ENCODE measurements at regions of chr11 and their contacts with region 1.

Region 1: GRCh38 chr11:34250732-34251639 is 106.8 kb downstream of the ABTB2 start:
- DNase-seq: peak; percentile 67
- ATAC-seq: peak; percentile 90
- H3K4me3 Mint-ChIP-seq: peak overlapping the region; percentile 72
- H3K27ac Mint-ChIP-seq: peak overlapping the region; percentile 58
- H3K4me1 Mint-ChIP-seq: peaks cover 53% of the 10 kb centered on the region
- H3K27me3 Mint-ChIP-seq: peaks cover 8% of the 10 kb centered on the region

Region 2: DNA sequence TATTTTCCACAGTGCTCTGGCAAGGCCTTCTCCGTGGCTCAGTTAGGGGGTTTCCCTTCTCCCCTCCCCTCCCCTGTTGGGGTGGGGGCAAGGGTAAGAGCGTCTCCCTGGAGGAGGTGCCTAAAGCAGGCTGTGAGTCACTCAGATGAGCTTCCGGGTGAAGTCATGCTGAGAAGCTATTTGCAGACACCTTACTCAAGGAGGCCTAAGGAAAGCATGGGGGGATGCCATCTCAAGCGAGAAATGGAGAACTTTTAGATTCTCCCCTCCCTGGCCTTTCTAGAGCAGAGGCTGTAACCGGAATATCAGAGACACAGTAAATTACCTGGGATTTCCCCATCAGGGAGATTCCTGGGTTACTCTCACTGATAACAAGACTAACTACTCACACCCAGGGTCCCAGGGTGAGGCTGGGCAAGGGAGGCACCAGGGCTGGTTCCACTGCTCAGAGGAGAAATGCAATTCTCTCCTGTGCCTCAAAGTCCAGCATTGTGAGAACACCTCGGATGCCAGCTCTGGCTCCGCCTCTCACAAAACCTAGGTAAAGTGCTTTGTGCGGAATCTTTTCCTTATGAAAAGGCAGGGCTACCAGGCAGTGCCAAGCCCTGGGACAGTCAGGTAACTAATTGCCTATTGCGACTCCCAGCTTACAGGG is 16.8 kb before region 1 on chr11:
- POLR2A ChIA-PET with region 1: interaction called, 17 read pairs
- DNase-seq: peak; percentile 61
- ATAC-seq: peak; percentile 97
- H3K4me3 Mint-ChIP-seq: peak overlapping the region; percentile 43
- H3K27ac Mint-ChIP-seq: peak overlapping the region; percentile 61
- H3K4me1 Mint-ChIP-seq: peaks cover 15% of the 10 kb centered on the region
- H3K27me3 Mint-ChIP-seq: peaks cover 5% of the 10 kb centered on the region

Region 3: GRCh38 chr11:34380696-34381095 is 129.7 kb after region 1 on chr11:
- POLR2A ChIA-PET with region 1: no interaction called
- DNase-seq: no peak
- ATAC-seq: no peak
- H3K4me3 Mint-ChIP-seq: no peak overlapping the region
- H3K27ac Mint-ChIP-seq: no peak overlapping the region
- H3K4me1 Mint-ChIP-seq: no peaks in the 10 kb centered on the region
- H3K27me3 Mint-ChIP-seq: peaks cover 20% of the 10 kb centered on the region